Heart right ventricle (tissue), 16 donors: ENCODE measurements at regions of chr17 and their contacts with region 1.

Region 1: GRCh38 chr17:16923904-16924695 is 47.8 kb downstream of the TNFRSF13B start:
- DNase-seq: no peak
- ATAC-seq: no peak
- H3K4me3 ChIP-seq: no peak overlapping the region
- H3K27ac ChIP-seq: no peak overlapping the region
- H3K4me1 ChIP-seq: no peaks in the 10 kb centered on the region
- H3K27me3 ChIP-seq: no peaks in the 10 kb centered on the region
- CTCF ChIP-seq: no peak

Region 2: DNA sequence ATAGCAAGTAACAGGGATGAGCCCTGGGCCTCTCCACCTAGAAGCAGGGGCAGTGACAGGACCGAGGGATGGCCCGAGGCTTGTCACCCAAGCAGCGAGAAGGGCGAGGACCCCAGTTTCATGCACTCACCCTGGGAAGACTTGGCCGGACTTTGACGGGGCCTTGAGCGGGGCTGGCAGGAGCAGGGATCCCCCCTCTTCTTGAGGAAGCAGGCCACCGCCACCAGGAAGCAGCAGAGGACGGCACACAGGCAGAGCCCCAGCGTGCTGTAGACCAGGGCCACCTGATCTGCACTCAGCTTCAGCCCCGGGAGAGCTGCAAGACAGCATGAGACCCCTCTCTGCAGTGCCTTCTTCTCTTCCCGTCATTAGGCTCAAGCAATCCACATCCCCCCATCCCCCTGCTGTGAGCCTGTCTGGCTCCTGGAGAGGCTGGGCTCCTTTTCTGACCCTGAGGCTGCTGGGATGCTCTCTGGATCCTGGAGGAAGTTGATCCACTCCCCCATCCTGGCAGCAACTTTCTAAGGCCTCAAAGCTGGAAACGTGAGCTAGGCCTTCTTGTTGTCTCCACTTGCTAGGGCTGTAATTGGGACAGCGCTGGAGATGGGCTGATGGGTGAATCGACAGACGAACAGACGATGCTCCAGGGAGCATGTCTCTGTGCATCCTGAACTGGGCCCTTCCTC is 16.2 kb after region 1 on chr17:
- intact Hi-C with region 1: loop called in 1 of 10 experiments (anchors 2 kb)
- DNase-seq: no peak
- ATAC-seq: no peak
- H3K4me3 ChIP-seq: no peak overlapping the region
- H3K27ac ChIP-seq: no peak overlapping the region
- H3K4me1 ChIP-seq: no peaks in the 10 kb centered on the region
- H3K27me3 ChIP-seq: peaks cover 0 to 15% (median 4%) of the 10 kb centered on the region in 7 donors
- CTCF ChIP-seq: no peak